HepG2 (cell line): ENCODE measurements at regions of chr13 and their contacts with region 1.

Region 1: DNA sequence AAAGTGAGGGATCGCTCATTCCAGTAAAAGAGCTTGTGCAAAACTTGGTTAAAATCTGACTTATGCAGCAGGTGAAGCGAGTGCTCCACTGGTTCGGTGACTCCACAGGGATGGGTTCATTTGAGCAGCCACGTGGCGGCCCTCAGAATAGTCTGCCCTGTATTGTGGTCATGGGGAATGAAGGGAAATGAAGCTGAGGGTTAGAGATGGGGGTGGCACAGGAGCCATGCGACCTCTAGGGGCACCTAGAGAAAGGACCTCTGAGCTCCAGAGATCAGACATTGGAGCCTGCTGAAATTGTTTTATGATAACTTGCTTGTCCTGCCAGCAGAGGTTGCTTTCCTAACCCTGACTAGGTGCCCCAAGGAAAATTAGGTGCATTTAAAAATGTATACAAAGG is 26.6 kb downstream of the CBY2 start:
- DNase-seq: peak; percentile 57
- ATAC-seq: peak; percentile 98
- H3K4me3 ChIP-seq: no peak overlapping the region
- H3K27ac ChIP-seq: no peak overlapping the region
- H3K4me1 ChIP-seq: peaks cover 34% of the 10 kb centered on the region
- H3K27me3 ChIP-seq: no peaks in the 10 kb centered on the region; a peak in 1 of 5 replicates
- CTCF ChIP-seq: peak; percentile 64
- EP300 ChIP-seq: no peak
- POLR2A ChIP-seq: no peak
- RAD21 ChIP-seq: 0 out of 2 replicates have a peak, but pooled peaks have one; percentile 25

Region 2: GRCh38 chr13:45623515-45624090 is 105.2 kb before region 1 on chr13:
- CTCF ChIA-PET with region 1: no interaction called
- POLR2A ChIA-PET with region 1: no interaction called
- in situ Hi-C with region 1: loop called (anchors 5 kb)
- intact Hi-C with region 1: loop called (anchors 5 kb)
- DNase-seq: peak; percentile 19
- ATAC-seq: peak; percentile 67
- H3K4me3 ChIP-seq: no peak overlapping the region
- H3K27ac ChIP-seq: no peak overlapping the region
- H3K4me1 ChIP-seq: peaks cover 9% of the 10 kb centered on the region
- H3K27me3 ChIP-seq: peaks cover 2 to 3% of the 10 kb centered on the region in 2 experiments; a peak in 1 of 5 replicates
- CTCF ChIP-seq: peak; percentile 64
- EP300 ChIP-seq: no peak
- POLR2A ChIP-seq: no peak
- RAD21 ChIP-seq: no peak

Region 3: GRCh38 chr13:45670189-45670885 is 58.4 kb before region 1 on chr13:
- CTCF ChIA-PET with region 1: no interaction called
- POLR2A ChIA-PET with region 1: no interaction called
- in situ Hi-C with region 1: no loop called
- intact Hi-C with region 1: loop called (anchors 2 kb)
- DNase-seq: no peak
- ATAC-seq: no peak
- H3K4me3 ChIP-seq: no peak overlapping the region; a peak in 2 of 6 replicates
- H3K27ac ChIP-seq: no peak overlapping the region
- H3K4me1 ChIP-seq: no peaks in the 10 kb centered on the region
- H3K27me3 ChIP-seq: no peaks in the 10 kb centered on the region; a peak in 1 of 5 replicates
- CTCF ChIP-seq: no peak
- EP300 ChIP-seq: no peak
- POLR2A ChIP-seq: no peak
- RAD21 ChIP-seq: no peak

Region 4: DNA sequence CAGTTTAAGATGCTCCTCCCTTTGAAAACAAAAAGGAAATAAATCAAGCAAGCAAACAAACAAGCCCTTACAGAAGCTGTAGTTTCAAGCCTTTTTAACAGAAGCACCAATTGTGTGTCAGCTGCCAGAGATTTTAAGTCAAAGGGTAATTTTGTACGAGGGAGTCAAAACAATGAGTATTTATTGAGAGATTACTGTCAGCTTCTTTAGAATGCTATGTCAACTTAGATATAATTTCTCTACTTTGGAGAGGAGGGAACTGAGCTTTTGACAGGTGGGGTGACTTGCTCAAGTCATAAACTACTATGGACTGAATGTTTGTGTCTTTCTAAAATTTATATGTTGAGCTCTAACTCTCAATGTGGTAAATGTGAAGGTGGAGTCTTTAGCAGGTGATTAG is 37.1 kb before region 1 on chr13:
- CTCF ChIA-PET with region 1: no interaction called
- POLR2A ChIA-PET with region 1: no interaction called
- in situ Hi-C with region 1: no loop called
- intact Hi-C with region 1: loop called (anchors 2 kb)
- DNase-seq: no peak
- ATAC-seq: no peak
- H3K4me3 ChIP-seq: no peak overlapping the region
- H3K27ac ChIP-seq: no peak overlapping the region
- H3K4me1 ChIP-seq: no peaks in the 10 kb centered on the region
- H3K27me3 ChIP-seq: 0 out of 5 replicates have a peak, but pooled peaks cover 0 to 10% of the 10 kb centered on the region in 2 experiments
- CTCF ChIP-seq: no peak
- EP300 ChIP-seq: no peak
- POLR2A ChIP-seq: no peak
- RAD21 ChIP-seq: no peak

Region 5: DNA sequence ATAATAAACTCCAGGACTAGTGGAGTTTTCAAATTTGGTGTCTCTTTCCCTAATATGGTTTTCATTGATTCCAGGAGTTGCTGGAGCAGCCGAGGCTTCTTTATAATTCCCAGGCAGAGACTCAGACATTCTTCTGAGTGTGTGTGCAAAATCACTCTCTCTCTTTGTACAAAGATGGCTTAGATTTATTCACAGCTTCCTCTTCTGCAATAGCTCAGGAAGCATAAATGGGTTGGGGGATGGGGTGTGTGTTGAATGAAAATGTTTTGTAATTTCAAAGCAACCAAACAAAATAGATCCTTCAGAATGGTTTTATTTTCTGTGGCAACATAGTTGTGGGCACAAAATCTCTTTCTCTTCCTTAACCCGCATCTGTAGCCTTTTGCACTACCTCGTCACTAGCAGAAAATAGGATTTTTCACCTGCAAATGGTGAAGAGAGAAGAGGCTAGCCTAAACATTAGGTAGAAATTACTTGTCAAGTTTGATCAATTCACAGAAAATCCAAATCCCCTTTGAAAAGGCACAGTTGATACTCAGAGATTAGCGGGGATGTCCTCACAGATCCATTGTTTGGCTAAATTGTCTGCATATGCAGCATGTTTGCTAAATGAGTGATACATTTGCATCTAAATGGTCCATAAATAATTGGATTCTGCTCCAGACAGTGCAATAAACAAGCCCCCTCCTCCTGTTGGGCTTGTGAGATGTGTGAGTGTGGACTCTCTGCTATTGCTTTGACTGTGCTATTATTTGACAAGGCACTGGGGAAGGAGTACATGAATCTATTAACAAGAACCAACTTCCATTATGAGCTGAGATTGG is 40.1 kb after region 1 on chr13:
- CTCF ChIA-PET with region 1: no interaction called
- POLR2A ChIA-PET with region 1: no interaction called
- in situ Hi-C with region 1: no loop called
- intact Hi-C with region 1: no loop called
- DNase-seq: no peak
- ATAC-seq: no peak
- H3K4me3 ChIP-seq: no peak overlapping the region
- H3K27ac ChIP-seq: no peak overlapping the region
- H3K4me1 ChIP-seq: peaks cover 13% of the 10 kb centered on the region
- H3K27me3 ChIP-seq: no peaks in the 10 kb centered on the region
- CTCF ChIP-seq: no peak
- EP300 ChIP-seq: no peak
- POLR2A ChIP-seq: no peak
- RAD21 ChIP-seq: no peak